ENCODE measurements at regions of chr6 and their contacts with region 1.

Region 1: DNA sequence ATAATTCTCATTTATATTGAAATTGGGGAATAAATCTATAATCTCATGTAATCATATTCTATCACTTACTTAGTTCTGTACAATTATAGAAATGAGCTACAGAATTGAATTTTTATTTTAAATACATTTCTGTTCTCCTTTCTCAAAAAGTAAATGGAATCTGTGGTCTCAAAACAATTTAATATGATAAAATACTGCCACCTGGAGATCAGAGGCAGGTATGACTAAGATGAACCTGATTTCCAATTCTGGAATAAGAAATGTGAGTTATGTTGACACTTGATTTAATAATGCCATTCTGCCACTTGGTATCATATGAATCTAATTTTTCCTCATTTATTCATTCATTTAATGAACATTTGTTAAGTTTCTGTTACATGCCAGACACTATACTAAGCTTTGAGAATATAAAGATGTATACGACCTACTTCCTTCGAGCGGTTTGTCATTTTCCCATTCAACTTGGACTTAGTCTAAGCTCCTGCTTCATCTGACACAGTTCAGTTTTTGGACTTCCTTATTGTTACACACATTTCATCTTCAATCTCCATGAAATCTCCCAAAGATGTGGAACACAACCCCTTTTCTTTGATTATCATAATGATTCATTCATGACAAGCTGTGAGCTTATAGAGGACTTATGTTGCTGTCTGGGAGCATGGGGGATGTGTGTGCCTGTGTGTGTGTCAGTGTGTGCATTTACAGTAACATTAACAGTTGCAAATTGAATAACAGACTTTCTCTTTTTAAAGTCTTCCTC is 7.5 kb upstream of the CCDC28A start:
- DNase-seq: peak in 1 of 7 donors; percentile 7
- H3K4me3 ChIP-seq: no peak overlapping the region
- H3K27ac ChIP-seq: no peak overlapping the region
- H3K4me1 ChIP-seq: peaks cover 0 to 5% of the 10 kb centered on the region in 2 donors
- H3K27me3 ChIP-seq: no peaks in the 10 kb centered on the region
- CTCF ChIP-seq: peak; percentile 39 to 83 (median 72)
- POLR2A ChIP-seq: no peak

Region 2: GRCh38 chr6:138428944-138429598 is 337.0 kb before region 1 on chr6:
- intact Hi-C with region 1: loop called (anchors 5 to 10 kb)
- DNase-seq: peak in 1 of 7 donors; percentile 26
- H3K4me3 ChIP-seq: no peak overlapping the region
- H3K27ac ChIP-seq: no peak overlapping the region
- H3K4me1 ChIP-seq: no peaks in the 10 kb centered on the region
- H3K27me3 ChIP-seq: no peaks in the 10 kb centered on the region
- CTCF ChIP-seq: peak; percentile 29 to 70 (median 62)
- POLR2A ChIP-seq: no peak

Region 3: DNA sequence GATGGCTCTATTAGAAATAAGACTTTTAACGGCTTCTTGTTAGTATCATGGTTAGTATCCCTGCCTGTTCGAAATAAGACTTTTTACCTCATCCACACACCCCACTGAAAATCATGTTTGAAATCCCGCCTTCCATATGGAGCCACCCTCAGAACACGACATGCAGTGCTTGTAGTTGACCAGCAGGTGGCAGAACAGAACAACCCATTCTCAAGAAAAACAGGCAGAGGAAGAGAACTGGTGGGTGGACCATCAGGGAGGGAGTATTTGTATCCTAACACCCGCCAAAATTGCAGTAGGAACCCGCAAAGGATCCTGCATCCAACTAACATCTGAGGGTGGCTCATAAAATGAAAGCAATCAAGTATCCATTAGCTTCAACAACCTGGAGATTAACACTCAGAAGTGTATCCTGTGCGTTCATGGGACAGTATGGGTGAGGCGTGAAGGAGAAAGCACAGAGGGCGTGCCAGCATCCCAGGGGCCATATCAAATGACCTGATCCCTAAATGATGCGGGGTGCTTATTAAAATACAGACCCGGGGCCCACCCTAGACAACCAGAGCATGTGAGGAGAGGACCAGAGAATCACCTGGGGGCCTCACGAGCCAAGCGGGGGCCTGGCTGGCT is 177.2 kb before region 1 on chr6:
- intact Hi-C with region 1: loop called (anchors 5 kb)
- DNase-seq: peak; percentile 49 to 76 (median 58)
- H3K4me3 ChIP-seq: no peak overlapping the region
- H3K27ac ChIP-seq: no peak overlapping the region
- H3K4me1 ChIP-seq: peaks cover 5 to 23% of the 10 kb centered on the region in 2 donors
- H3K27me3 ChIP-seq: no peaks in the 10 kb centered on the region
- CTCF ChIP-seq: peak; percentile 85 to 95 (median 90)
- POLR2A ChIP-seq: no peak

Region 4: DNA sequence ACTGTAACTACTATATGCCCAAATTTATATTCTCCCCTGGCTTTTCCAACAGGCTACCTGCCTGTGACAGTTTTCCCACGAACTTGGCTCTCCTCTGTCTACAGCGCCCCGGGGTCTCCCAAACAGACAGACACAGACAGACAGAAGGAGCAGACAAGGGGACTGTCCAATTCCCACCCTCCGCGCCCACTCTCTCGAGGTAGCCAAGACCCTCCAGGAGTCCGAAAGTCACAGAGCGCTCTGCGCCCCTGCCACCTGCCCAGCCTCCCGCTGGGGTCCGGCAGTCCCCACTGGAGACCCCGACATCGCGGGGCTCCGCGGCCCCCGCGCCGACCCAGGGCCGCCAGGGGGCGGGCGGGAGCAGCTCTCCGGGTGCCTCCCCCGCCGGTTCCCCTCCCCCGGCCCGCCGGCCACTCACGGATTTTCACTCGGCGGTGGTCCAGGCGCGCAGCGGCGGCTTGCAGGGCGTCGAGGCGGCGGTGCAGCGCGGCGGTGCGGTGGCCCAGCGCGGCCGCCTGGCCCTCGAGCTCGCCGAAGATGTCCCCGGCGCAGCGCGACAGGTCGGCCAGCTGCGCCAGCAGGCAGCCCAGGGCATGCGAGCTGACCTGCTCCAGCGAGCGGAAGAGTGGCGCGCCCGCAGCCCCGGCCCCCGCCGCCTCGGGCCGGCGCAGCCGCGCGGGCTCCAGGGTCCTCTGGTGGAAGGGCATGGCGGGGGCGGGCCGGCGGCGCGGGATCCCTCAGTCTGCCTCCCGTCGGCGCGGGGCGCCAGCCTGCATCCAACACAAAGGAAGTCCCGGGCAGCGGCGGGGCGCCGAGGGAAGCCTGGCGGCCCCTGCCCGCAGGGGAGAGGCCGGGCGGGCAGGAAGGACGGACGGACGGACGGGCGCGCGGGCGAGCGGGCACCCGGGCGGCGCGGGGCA is 73.8 kb before region 1 on chr6:
- intact Hi-C with region 1: loop called in 1 of 2 experiments (anchors 5 kb)
- DNase-seq: peak; percentile 57 to 76 (median 72)
- H3K4me3 ChIP-seq: peak overlapping the region in 3 of 4 donors; percentile 0 to 99 (median 58)
- H3K27ac ChIP-seq: peak overlapping the region in 4 of 5 donors; percentile 51 to 94 (median 76)
- H3K4me1 ChIP-seq: peaks cover 0 to 5% of the 10 kb centered on the region in 2 donors
- H3K27me3 ChIP-seq: no peaks in the 10 kb centered on the region
- CTCF ChIP-seq: peak; percentile 31 to 91 (median 68)
- POLR2A ChIP-seq: no peak

Measured in adrenal gland (tissue), 19 donors.